GM12878 (cell line): ENCODE measurements at regions of chr13 and their contacts with region 1.

Region 1: DNA sequence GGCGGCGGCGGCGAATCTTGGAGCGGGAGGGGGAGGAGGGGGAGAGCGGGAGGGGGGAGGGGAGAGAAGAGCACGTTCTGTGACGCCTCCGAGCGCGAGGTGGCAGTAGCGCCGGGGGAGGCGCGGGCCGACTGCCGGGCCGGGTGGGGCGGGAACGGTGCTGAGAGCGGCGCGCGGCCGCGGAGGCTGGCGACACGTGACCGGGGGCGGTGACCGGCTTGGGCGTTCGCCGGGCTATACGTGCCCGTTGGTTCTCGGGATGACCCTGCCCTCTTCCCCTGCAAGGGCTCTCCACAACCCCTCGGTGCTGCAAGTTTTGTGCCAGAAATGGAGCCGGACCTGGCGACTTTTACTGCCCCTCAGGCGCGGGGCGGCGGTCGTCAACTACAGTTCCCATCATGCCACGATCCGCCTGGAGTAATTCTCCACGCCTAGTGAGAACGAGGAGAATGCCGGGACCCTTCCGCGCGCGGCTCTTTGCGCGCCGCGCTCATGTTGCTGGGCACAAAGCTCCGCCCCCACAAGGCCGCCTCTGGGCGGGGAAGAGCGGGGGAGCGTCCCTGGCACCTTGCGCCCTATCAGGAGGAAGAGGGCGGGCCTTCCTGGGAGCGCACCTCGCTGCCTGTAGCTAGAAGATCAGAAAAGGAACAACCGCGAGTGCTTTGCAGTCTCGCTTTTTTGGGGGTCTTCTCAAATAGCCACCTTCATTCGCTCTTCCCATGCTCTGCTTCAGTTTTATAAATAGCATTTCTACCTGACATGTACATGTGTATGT is at the start of gene KPNA3:
- DNase-seq: peak; percentile 85
- ATAC-seq: peak; percentile 94
- H3K4me3 ChIP-seq: peak within 1 kb of the TSS; percentile 91
- H3K27ac ChIP-seq: peak within 1 kb of the TSS; percentile 83
- H3K4me1 ChIP-seq: peaks cover 6% of the 10 kb centered on the region
- H3K27me3 ChIP-seq: no peaks in the 10 kb centered on the region
- CTCF ChIP-seq: peak in 1 of 3 experiments; percentile 38; a peak in 2 of 6 replicates
- EP300 ChIP-seq: no peak
- POLR2A ChIP-seq: peak; percentile 52
- RAD21 ChIP-seq: no peak
- polyA plus RNA-seq, gene KPNA3: 23.3 to 27.5 TPM

Region 2: DNA sequence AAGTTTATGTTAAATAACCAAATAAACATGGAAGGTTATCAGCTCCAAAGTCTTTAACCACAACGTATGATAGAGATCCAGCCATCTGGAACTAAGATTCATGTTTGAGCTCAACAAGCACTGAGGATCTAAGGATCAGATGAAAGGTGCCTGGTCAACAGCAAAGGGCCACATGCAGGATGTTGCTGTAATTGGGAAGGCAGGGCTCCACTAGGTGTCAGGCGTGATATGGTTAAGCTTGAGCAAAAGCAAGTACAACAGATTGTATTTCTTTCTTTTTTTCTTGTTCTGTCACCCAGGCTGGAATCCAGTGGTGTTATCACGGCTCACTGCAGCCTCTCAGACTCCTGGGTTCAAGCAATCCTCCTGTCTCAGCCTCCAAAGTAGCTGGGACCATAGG is 113.5 kb before region 1 on chr13:
- CTCF ChIA-PET with region 1: interaction called, 12 read pairs
- POLR2A ChIA-PET with region 1: no interaction called
- RAD21 ChIA-PET with region 1: interaction called, 5 read pairs
- SMC1A ChIA-PET with region 1: interaction called, 9 read pairs
- in situ Hi-C with region 1: no loop called
- intact Hi-C with region 1: no loop called
- DNase-seq: no peak
- ATAC-seq: no peak; the same call in 2 of the 3 replicates
- H3K4me3 ChIP-seq: no peak overlapping the region
- H3K27ac ChIP-seq: no peak overlapping the region
- H3K4me1 ChIP-seq: peaks cover 12% of the 10 kb centered on the region
- H3K27me3 ChIP-seq: no peaks in the 10 kb centered on the region
- CTCF ChIP-seq: peak in 2 of 3 experiments; percentile 29 to 47; a peak in 3 of 6 replicates
- EP300 ChIP-seq: no peak
- POLR2A ChIP-seq: no peak
- RAD21 ChIP-seq: peak; percentile 70

Region 3: DNA sequence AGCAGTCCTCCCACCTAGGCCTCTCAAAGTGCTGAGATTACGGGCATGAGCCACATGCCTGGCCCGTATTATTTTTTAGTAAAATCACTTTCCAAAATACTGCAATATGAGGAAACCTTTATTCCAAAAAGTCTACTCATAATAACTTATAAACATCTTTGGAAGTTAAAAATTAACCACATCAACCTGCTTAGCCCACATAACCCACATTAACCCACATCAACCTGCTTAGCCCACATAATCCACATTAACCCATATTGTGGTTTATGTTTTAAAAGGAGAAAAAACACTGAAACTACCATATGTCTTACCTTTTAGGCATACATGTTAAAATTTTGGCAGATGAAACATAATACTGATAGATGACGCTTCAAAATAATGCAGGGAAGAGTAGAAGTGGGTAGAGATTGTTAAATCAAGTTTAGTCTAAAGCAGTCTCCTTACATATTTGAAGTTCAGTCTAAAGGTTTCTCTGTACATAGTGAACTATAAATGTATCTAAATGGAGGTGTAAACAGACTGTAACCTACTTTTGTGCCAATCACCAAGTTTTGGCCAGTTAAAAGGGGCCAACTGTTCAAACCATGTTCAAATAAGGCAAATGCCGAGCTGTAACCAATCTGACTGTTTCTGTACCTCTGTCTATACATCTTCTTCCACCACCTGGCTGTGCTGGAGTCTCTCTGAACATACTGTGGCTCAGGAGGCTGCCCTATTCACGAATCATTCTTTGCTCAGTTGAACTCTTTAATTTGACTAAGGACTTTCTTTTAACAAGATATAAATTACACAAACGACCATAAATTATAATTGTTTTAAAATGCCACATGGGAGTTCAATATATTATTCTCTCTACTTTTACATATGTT is 14.8 kb before region 1 on chr13:
- CTCF ChIA-PET with region 1: interaction called, 10 read pairs
- POLR2A ChIA-PET with region 1: interaction called, 3 read pairs
- RAD21 ChIA-PET with region 1: interaction called, 6 read pairs
- SMC1A ChIA-PET with region 1: interaction called, 22 read pairs
- in situ Hi-C with region 1: no loop called
- intact Hi-C with region 1: no loop called
- DNase-seq: no peak
- ATAC-seq: peak; percentile 60
- H3K4me3 ChIP-seq: no peak overlapping the region
- H3K27ac ChIP-seq: no peak overlapping the region
- H3K4me1 ChIP-seq: no peaks in the 10 kb centered on the region
- H3K27me3 ChIP-seq: no peaks in the 10 kb centered on the region
- CTCF ChIP-seq: no peak
- EP300 ChIP-seq: no peak
- POLR2A ChIP-seq: no peak
- RAD21 ChIP-seq: no peak

Region 4: DNA sequence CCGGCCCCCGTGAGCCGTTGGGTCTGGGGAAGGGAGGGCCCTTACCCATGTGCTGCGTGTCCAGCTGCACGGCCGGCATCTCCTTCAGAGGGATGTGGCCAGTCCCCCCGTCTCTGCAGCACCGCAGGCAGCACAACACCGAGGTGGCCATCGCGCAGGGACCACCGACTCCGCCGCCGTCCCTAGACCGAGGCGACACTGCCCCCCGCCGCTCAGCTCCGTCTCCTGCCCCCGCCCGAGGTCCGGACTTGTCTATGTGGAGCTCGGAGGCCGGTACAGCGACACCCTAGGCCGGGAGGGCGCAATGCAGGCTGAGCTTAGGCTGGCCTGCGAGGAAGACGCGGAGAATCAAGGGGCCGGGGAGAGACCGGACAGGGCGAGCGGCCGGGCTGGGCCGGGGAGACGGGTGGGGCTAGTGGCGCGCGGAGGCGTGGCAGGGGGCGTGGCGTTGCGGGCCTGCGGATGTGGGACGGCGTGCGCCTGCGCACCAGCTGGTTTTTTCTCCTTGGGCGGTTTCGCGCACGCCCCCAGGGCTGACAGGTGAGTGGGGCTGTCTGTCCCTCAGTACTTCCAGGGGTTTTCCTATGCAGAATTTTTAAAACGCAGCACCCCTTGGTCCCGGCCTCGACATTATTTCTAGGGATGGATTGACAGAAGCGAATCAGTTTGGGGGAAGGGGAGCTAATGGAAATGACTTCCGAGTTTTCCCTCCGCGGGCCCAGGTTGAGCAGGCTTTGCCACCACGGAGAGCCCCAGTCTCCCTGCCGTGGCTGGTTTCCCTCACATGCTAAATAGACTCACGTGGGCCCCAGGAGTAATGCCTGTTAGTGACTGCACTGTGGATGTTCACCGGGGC is 143.6 kb after region 1 on chr13 and contains the start of gene SPRYD7:
- CTCF ChIA-PET with region 1: interaction called, 10 read pairs
- POLR2A ChIA-PET with region 1: interaction called, 7 read pairs
- RAD21 ChIA-PET with region 1: interaction called, 14 read pairs
- SMC1A ChIA-PET with region 1: interaction called, 3 read pairs
- in situ Hi-C with region 1: no loop called
- intact Hi-C with region 1: loop called (anchors 10 kb)
- DNase-seq: peak; percentile 90
- ATAC-seq: peak; percentile 97
- H3K4me3 ChIP-seq: peak within 1 kb of the TSS; percentile 82
- H3K27ac ChIP-seq: peak within 1 kb of the TSS; percentile 58
- H3K4me1 ChIP-seq: 0 out of 2 replicates have a peak, but pooled peaks cover 2% of the 10 kb centered on the region
- H3K27me3 ChIP-seq: no peaks in the 10 kb centered on the region
- CTCF ChIP-seq: peak; percentile 96 to 97 (median 96)
- EP300 ChIP-seq: 0 out of 4 replicates have a peak, but pooled peaks of 1 of the 2 experiments have one; percentile 2
- POLR2A ChIP-seq: peak; percentile 91
- RAD21 ChIP-seq: peak; percentile 56
- polyA plus RNA-seq, gene SPRYD7: 12.9 to 13.0 TPM